ENCODE measurements at regions of chr5 and their contacts with region 1.

Region 1: GRCh38 chr5:181223058-181223728 is at the start of gene TRIM41:
- DNase-seq: peak; percentile 99
- H3K4me3 ChIP-seq: peak within 1 kb of the TSS; percentile 86
- H3K27ac ChIP-seq: peak within 1 kb of the TSS; percentile 97
- H3K4me1 ChIP-seq: peaks cover 47% of the 10 kb centered on the region
- CTCF ChIP-seq: 0 out of 2 replicates have a peak, but pooled peaks have one; percentile 24
- total RNA-seq, gene TRIM41: 30.2 and 30.4 TPM in 2 replicates

Region 2: DNA sequence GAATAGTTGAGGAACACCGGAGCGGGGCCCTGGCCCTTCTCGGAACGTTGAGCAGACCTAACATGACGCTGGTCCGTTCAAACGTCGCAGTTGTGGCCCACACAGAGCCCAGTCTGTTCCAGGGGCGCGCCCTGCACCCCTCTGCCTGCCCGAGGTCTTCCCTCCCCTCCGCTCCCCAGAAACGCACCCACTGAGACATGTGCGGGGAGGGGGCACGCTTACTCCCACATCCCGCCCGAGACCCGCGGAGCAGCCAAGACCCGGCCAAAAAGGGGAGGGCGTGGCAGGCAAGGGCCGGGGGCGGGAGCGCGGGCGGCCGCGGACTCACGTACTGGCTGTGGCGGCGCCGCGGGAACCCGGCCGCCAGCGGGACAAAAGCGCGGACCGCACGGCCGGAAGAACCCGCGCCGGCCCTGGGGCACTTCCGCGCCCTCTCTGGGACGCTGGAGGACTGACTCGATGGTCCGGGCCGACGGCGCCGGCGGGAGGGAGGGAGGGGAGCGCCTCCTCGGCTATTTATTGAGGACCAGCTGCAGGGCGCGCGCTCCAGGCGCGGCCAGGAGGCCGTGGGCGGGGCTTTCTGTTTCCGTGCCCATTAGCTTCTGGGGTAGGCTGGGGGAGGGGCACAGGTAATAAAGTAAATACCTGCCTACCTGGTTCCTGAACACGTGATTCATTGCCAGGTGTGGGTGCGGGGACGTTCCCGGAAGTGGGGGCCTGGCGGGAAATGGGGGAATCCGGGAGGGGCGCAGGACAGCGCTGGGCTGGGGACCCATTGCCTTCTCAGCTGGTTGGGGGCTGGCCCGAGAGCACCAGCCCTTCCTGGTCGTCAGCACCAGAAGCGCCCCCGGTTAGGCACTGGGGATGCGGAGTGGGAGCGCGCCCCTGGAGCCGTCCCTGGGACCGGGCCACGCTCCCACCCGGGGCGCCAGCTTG is 362.0 kb before region 1 on chr5 and contains the start of gene ZFP62:
- CTCF ChIA-PET with region 1: no interaction called
- POLR2A ChIA-PET with region 1: no interaction called
- intact Hi-C with region 1: loop called (anchors 1 kb)
- DNase-seq: peak; percentile 96
- H3K4me3 ChIP-seq: peak within 1 kb of the TSS; percentile 96
- H3K27ac ChIP-seq: peak within 1 kb of the TSS; percentile 95
- H3K4me1 ChIP-seq: peaks cover 18% of the 10 kb centered on the region
- CTCF ChIP-seq: no peak
- total RNA-seq, gene ZFP62: 58.4 and 59.0 TPM in 2 replicates

Region 3: GRCh38 chr5:181151146-181151545 is 72.0 kb before region 1 on chr5:
- CTCF ChIA-PET with region 1: no interaction called
- POLR2A ChIA-PET with region 1: no interaction called
- intact Hi-C with region 1: no loop called
- DNase-seq: peak; percentile 48
- H3K4me3 ChIP-seq: no peak overlapping the region
- H3K27ac ChIP-seq: no peak overlapping the region
- H3K4me1 ChIP-seq: peaks cover 25% of the 10 kb centered on the region
- CTCF ChIP-seq: 0 out of 2 replicates have a peak, but pooled peaks have one; percentile 49

Region 4: GRCh38 chr5:181173420-181174342 is 49.5 kb before region 1 on chr5:
- CTCF ChIA-PET with region 1: no interaction called
- POLR2A ChIA-PET with region 1: interaction called, 3 read pairs
- intact Hi-C with region 1: loop called (anchors 2 kb)
- DNase-seq: peak; percentile 91
- H3K4me3 ChIP-seq: peak overlapping the region; percentile 74
- H3K27ac ChIP-seq: peak overlapping the region; percentile 88
- H3K4me1 ChIP-seq: peaks cover 39% of the 10 kb centered on the region
- CTCF ChIP-seq: peak; percentile 64; the same call in 1 of the 2 replicates

Region 5: GRCh38 chr5:181191529-181192394 is 31.4 kb before region 1 on chr5:
- CTCF ChIA-PET with region 1: interaction called, 8 read pairs
- POLR2A ChIA-PET with region 1: interaction called, 8 read pairs
- intact Hi-C with region 1: loop called (anchors 1 kb)
- DNase-seq: peak; percentile 96
- H3K4me3 ChIP-seq: peak overlapping the region; percentile 69
- H3K27ac ChIP-seq: peak overlapping the region; percentile 82
- H3K4me1 ChIP-seq: peaks cover 24% of the 10 kb centered on the region
- CTCF ChIP-seq: no peak

Region 6: DNA sequence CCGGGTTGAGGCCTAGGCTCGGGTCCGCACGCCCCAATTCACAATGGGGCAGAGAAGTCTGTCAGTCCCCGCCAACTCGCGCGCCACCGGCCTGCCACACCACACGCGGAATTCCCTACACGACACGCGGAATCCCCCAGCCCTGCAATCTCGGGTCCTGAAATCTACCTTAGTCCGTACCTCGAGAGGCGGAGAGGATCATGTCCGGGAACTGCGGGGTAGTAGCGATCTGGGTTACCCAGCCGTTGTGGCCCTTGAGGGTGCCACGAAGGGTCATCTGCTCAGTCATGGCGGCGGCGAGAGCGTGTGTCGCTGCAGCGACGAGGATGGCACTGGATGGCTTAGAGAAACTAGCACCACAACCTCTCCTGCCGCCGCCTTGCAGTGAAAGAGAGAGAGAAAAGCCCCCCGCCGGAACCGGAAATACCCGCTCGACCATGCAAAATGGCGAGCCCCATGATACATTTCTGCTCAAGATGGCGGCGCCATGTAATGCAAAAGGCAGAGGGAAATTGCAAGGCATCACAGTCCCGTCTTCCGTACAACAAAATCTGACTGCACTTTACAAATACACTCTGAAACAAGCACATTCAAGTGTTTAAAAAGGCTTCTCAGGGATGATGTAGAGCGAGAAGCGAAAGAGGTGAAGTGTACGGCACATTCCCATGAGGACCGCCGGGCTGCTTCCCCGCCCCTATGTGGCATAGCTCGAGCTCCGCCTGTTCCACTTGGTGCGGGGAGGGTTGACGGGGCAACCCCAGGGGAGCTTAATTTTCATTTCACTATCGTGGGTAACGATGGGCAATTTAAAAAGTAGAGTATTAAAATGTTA is 20.5 kb after region 1 on chr5 and contains the start of gene RACK1:
- CTCF ChIA-PET with region 1: no interaction called
- POLR2A ChIA-PET with region 1: interaction called, 4 read pairs
- intact Hi-C with region 1: loop called (anchors 1 kb)
- DNase-seq: peak; percentile 94
- H3K4me3 ChIP-seq: peak within 1 kb of the TSS; percentile 89
- H3K27ac ChIP-seq: peak within 1 kb of the TSS; percentile 89
- H3K4me1 ChIP-seq: peaks cover 53% of the 10 kb centered on the region
- CTCF ChIP-seq: no peak
- total RNA-seq, gene RACK1: 4,583 and 5,614 TPM in 2 replicates